Esophagus muscularis mucosa (tissue), 4 donors: ENCODE measurements at regions of chrX and their contacts with region 1.

Region 1: GRCh38 chrX:74382613-74383012 is 38.7 kb upstream of the SLC16A2 start:
- DNase-seq: no peak
- H3K4me3 ChIP-seq: no peak overlapping the region
- H3K27ac ChIP-seq: no peak overlapping the region
- H3K4me1 ChIP-seq: no peaks in the 10 kb centered on the region
- H3K27me3 ChIP-seq: no peaks in the 10 kb centered on the region
- CTCF ChIP-seq: peak; percentile 49 to 74 (median 63)
- EP300 ChIP-seq: no peak
- POLR2A ChIP-seq: no peak

Region 2: GRCh38 chrX:74251006-74251930 is 131.3 kb before region 1 on chrX:
- intact Hi-C with region 1: no loop called
- DNase-seq: no peak
- H3K4me3 ChIP-seq: no peak overlapping the region
- H3K27ac ChIP-seq: peak overlapping the region; percentile 7 to 47 (median 44)
- H3K4me1 ChIP-seq: peaks cover 15 to 47% (median 31%) of the 10 kb centered on the region in 4 donors
- H3K27me3 ChIP-seq: no peaks in the 10 kb centered on the region
- CTCF ChIP-seq: no peak
- EP300 ChIP-seq: no peak
- POLR2A ChIP-seq: no peak

Region 3: DNA sequence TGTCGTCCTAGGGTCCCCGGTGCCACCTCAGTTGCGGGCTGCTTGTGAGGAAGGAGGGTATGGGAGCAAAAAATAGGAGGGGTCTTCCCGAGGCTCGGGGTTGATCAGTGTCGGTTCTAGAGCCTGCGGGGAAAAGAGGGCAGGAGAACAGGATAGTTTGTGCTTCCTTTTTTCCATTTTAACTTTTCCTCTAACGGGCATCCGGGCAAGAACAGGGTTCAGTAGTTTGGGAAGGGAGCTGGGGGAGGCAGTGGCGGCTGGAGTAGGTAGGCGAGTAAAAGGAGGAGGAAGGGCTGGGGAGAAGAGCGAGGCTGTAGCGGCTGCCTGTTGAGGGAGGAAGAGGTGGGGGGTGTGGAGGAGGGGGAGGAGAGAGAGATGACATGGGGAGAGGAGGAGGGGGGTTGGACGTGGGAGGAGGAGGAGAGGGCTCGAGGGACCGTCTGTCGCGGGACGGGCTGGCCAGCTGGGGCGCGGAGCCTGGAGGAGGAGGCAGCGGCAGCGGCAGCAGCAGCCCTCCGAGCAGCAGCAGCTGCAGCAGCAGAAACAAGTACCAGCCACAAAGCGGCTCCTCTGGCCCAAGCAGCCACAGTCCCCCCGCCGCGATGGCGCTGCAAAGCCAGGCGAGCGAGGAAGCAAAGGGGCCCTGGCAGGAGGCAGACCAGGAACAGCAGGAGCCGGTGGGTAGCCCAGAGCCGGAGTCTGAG is 38.6 kb after region 1 on chrX and contains the start of gene SLC16A2:
- intact Hi-C with region 1: loop called (anchors 5 kb)
- DNase-seq: no peak
- H3K4me3 ChIP-seq: peak within 1 kb of the TSS; percentile 60 to 69 (median 60)
- H3K27ac ChIP-seq: peak within 1 kb of the TSS; percentile 89 to 93 (median 92)
- H3K4me1 ChIP-seq: peaks cover 5 to 31% (median 24%) of the 10 kb centered on the region in 4 donors
- H3K27me3 ChIP-seq: peaks cover 0 to 5% (median 0%) of the 10 kb centered on the region in 4 donors
- CTCF ChIP-seq: no peak
- EP300 ChIP-seq: no peak
- POLR2A ChIP-seq: no peak
- total RNA-seq, gene SLC16A2: 7.3 to 13.7 (median 9.6) TPM

Region 4: DNA sequence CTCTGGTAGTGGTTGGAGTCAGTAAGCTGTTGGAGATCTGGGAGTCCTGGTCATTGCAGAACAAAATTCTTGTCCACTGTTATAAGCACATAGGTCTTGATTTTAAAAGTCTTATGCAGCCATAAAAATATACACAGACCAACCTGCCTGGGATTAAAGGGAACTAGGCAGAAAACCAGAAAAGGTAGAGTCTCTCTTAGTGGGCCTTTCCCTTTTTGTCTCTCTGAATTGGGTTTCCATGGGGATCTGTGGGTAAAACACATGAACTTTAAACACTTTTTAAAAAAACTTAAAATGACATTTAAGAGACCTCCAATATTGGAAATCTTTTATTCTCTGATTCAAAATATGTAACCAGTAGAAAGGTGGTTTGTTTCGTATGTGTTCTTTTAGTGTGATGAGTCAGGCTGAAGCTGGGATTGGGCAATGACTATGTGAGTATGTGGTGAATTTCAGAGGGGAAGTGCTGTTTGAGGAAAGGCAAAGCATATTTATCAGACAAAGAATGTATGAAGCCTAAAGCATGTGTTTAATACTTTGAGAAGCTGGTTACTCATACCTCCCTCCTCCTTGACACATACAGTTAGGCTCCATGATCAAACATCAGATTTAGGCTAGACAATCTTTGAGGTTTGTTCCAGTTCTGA is 68.3 kb after region 1 on chrX:
- intact Hi-C with region 1: loop called (anchors 10 kb)
- DNase-seq: no peak
- H3K4me3 ChIP-seq: no peak overlapping the region
- H3K27ac ChIP-seq: peak overlapping the region in 1 of 4 donors; percentile 10
- H3K4me1 ChIP-seq: peaks cover 0 to 11% (median 0%) of the 10 kb centered on the region in 4 donors
- H3K27me3 ChIP-seq: no peaks in the 10 kb centered on the region
- CTCF ChIP-seq: no peak
- EP300 ChIP-seq: no peak
- POLR2A ChIP-seq: no peak

Region 5: DNA sequence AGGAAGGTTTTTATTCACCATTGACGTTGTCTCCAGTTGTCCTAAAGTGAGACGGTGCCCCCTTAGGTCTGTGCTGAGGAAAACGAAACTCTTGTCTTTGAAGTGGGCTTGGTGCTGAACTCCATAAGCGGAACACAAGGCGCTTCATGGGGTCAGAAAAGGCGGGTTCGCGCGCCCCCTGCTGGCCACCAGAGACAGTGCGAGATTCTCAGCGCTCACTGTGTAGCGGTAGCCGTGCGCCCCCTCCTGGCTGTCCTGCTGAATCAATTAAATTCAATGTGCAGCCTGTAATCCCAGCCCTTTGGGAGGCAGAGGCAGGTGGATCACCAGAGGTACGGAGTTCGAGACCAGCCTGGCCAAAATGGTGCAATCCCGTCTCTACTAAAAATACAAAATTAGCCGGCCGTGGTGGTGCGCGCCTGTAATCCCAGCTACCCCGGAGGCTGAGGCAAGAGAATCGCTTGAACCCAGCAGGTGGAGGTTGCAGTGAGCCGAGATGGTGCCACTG is 167.7 kb after region 1 on chrX:
- intact Hi-C with region 1: loop called (anchors 2 kb)
- DNase-seq: peak; percentile 94
- H3K4me3 ChIP-seq: no peak overlapping the region
- H3K27ac ChIP-seq: peak overlapping the region in 1 of 4 donors; percentile 34
- H3K4me1 ChIP-seq: no peaks in the 10 kb centered on the region
- H3K27me3 ChIP-seq: no peaks in the 10 kb centered on the region
- CTCF ChIP-seq: peak; percentile 93 to 97 (median 96)
- EP300 ChIP-seq: no peak
- POLR2A ChIP-seq: no peak